Sciatic nerve (tissue), 2 donors: ENCODE measurements at regions of chr21 and their contacts with region 1.

Region 1: GRCh38 chr21:34745557-34746255 is 76.9 kb downstream of the CLIC6 start:
- DNase-seq: peak; percentile 81
- ATAC-seq: peak; percentile 89

Region 2: DNA sequence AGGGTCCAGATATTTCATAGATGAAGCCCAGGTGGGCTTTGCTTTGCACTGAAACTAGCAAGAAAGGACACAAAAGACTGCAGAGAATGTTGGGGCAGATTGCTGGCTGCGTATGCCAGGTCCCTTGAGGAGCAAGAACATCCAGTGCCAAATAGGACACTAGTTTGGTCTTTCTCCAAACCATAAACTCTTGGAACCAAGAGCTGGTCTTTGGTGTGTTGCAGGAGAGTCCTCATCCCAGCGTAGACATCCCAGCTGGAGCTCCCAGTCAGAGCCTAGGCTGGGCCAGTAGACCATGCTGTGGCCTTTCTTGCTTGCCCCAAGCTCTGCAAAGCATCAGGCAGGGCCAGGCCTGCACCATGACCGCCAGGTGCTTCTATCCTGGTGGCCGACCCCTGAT is 917.6 kb before region 1 on chr21:
- intact Hi-C with region 1: no loop called
- DNase-seq: peak; percentile 50
- ATAC-seq: peak; percentile 83

Region 3: DNA sequence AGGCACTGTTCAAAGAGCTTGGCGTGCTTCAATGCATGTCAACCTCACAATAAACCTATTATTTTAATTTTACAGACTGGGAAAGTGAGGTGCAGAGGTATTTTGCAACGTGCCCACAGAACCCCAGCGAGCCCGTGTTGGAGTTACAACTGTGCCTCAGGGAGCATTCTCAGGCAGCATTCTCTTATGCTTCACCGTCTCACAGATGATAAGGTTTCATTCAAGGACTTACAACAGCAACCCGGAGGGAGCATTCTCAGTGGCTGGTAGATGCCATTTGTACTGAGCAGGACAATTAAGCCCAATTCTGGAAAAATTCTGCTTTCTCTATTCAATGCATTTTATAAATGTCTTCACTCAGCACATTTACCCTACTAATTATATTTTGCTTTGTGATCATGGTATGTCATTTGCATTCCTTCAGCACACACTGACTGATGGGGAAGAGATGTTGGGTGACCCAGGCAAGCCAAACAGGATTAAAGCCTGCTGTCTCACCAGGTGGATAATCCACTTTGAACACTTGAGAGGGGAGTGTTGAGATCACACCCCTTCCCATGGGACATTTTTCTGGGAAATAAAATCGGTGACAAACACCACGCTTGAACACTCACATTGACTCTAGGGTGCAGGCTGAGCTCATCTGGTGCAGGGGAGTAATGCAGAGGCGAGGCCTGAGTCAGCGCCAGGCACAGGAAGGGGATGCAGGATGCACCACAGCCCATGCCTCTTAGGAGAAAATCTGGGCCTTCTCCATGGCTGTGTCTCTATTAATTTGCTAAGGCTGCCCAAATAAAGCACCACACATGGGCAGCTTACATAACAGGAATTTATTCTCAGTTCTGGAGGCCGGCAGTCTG is 37.0 kb after region 1 on chr21:
- intact Hi-C with region 1: no loop called
- DNase-seq: no peak
- ATAC-seq: peak; percentile 17

Region 4: GRCh38 chr21:34874684-34875513 is 129.2 kb after region 1 on chr21:
- intact Hi-C with region 1: loop called (anchors 10 kb)
- DNase-seq: no peak
- ATAC-seq: peak; percentile 59

Region 5: DNA sequence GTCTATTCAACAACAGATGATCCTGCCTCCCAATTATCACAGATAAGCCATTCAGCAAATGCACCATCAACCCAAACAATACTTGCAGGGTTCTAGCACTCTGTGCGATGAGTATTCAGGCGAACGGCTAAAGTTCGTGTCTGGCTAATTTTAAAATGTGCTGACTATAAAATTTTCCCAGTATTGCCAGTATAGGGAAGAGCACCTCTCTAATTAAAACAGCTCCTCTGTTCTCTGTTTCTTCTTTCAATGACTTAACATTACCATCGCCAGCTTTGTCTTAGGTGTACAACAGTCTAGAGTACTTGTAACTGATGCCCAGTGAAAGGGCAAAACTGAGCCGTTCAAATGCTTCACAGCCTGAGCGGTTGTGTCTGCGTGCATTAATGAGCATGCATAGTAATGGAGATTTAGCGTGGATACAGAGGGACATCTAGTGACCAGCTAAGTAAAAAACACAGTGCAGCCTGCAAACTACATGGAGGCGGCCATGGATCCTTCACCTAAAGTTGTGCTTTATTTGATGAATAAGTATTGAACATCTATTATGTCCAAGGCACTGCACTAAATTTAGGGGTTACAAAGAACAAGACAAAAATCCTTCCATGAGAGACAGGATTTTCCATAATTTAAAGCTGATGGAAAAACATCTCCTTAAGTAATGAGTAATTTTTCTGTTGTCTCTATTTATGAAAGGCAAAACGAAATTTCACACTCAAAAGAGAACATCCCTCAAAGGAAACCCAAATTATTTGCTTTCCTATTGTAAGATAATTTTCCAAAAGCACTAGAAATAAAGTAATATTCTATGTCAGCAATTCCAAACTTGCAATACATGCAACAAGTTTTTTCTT is 1194.6 kb after region 1 on chr21:
- intact Hi-C with region 1: loop called (anchors 10 kb)
- DNase-seq: no peak
- ATAC-seq: peak; percentile 98